ENCODE measurements at regions of chr1 and their contacts with region 1.

Region 1: DNA sequence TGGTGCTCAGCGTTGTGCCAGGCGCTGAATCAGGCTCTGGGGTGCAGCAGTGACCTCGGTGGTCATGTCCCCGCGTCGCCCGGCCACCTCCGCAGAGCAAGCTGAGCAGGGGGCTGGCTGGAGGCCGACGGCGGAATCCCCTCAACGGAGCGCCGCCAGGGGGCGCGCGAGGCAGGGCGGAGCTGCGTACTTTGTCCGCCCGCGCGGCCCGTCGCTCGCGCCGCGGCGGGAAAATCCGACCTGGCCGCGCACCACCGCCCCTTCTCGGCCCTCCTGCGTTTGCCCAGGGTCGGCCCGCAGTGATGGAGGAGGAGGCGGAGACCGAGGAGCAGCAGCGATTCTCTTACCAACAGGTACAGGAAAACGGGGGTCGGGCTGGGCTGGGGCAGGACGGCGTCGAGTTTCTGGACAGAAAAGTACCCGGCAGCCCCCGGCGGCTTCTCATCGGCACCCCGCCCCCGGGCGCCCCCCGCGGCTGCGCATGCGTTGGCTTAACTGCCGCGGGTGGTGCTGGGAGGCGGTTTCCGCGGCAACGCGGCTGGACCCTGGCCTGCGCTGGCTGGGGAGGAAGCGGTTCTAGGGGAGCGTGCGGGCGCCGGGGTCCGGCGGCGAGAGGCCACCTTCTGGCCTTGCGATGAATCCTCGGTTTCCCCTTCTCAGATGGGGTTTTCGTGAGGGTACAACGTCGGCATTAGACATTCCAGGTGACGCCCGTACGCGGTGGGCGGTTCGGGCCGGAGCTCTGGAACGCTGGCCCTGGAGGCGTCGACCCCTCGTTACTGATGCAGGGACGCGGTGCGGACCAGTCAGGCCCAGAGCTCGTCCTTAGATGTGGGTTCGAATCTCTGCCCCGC is at the start of gene CENPS:
- DNase-seq: peak; percentile 87
- H3K4me3 ChIP-seq: peak within 1 kb of the TSS; percentile 71 to 96 (median 87)
- H3K27ac ChIP-seq: peak within 1 kb of the TSS; percentile 91
- H3K4me1 ChIP-seq: peaks cover 9% of the 10 kb centered on the region
- H3K27me3 ChIP-seq: no peaks in the 10 kb centered on the region
- CTCF ChIP-seq: peak; percentile 65 to 89
- total RNA-seq, gene CENPS: 9.7 to 24.1 TPM

Region 2: DNA sequence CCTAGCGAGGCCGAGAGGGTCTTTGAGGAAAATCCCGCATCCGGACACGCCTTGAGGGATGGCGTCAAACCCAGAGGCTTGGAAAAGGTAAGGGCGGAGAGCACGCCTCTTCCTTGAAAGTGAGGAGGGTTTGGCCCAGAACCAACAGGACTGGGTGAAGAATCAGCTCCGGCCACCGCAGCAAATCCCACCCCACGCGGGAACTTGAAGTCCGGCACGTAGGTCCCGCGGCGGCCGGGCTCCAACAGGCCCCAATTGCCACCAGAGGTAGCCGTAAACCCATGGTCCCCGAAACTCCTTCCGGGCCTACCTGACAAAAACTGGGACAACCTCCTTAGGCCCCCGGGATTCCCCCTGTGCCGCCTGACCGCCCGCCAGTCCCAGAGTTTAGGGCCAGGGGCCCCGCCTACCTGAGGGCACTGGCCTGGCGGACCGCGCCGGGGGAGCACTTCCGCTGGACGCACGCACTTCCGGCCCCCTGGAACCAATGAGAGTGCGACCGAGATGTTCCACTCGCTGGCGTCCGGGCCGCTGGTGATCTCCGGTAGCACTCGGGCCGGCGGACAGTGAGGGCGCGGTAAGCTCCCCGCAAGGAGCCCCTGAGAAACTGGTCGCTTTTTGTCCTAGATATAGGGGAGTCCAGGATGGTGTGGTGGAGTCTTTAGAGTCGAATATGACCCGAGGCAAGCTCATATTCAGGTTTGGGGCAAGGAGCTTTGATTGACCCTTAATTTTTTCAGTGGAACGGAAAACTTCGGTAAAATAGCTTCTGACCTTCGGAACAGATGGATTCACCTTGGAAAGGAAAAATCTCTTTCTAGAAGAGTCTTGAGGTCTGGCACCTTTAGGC is 487.3 kb before region 1 on chr1 and contains the starts of genes LZIC and NMNAT1:
- CTCF ChIA-PET with region 1: no interaction called
- dilution Hi-C with region 1: no loop called
- in situ Hi-C with region 1: no loop called
- intact Hi-C with region 1: loop called (anchors 2 kb)
- DNase-seq: peak; percentile 95
- H3K4me3 ChIP-seq: peak within 1 kb of the TSS; percentile 66 to 77 (median 67)
- H3K27ac ChIP-seq: peak within 1 kb of the TSS; percentile 95
- H3K4me1 ChIP-seq: peaks cover 5% of the 10 kb centered on the region
- H3K27me3 ChIP-seq: no peaks in the 10 kb centered on the region
- CTCF ChIP-seq: no peak
- total RNA-seq, gene LZIC: 19.8 to 30.6 TPM
- total RNA-seq, gene NMNAT1: 9.7 to 11.1 TPM

Region 3: DNA sequence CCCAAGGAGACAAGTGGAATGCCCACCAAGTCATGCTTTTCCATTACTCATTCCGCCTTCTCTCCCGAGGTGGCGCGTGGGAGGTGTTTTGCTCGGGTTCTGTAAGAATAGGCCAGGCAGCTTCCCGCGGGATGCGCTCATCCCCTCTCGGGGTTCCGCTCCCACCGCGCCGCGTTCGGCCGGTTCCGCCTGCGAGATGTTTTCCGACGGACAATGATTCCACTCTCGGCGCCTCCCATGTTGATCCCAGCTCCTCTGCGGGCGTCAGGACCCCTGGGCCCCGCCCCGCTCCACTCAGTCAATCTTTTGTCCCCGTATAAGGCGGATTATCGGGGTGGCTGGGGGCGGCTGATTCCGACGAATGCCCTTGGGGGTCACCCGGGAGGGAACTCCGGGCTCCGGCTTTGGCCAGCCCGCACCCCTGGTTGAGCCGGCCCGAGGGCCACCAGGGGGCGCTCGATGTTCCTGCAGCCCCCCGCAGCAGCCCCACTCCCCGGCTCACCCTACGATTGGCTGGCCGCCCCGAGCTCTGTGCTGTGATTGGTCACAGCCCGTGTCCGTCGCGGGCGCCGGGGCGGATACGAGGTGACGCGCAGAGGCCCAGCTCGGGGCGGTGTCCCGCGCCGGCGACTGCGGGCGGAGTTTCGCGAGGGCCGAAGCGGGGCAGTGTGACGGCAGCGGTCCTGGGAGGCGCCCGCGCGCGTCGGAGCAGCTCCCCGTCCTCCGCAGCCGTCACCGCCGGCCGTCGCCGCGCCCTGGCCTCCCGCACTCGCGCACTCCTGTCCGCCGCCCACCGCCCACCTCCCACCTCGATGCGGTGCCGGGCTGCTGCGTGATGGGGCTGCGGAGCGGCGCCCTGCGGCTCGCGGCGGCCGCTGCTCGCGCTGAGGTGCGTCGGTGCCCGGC is 220.3 kb before region 1 on chr1 and contains the start of gene KIF1B:
- CTCF ChIA-PET with region 1: no interaction called
- dilution Hi-C with region 1: no loop called
- in situ Hi-C with region 1: no loop called
- intact Hi-C with region 1: loop called (anchors 1 kb)
- DNase-seq: peak; percentile 98
- H3K4me3 ChIP-seq: peak within 1 kb of the TSS; percentile 87 to 97 (median 93)
- H3K27ac ChIP-seq: peak within 1 kb of the TSS; percentile 87
- H3K4me1 ChIP-seq: peaks cover 16% of the 10 kb centered on the region
- H3K27me3 ChIP-seq: no peaks in the 10 kb centered on the region
- CTCF ChIP-seq: peak; percentile 56 to 98
- total RNA-seq, gene KIF1B: 24.7 to 36.2 TPM

Region 4: GRCh38 chr1:10378081-10378841 is 52.2 kb before region 1 on chr1:
- CTCF ChIA-PET with region 1: interaction called, 4 read pairs
- dilution Hi-C with region 1: no loop called
- in situ Hi-C with region 1: no loop called
- intact Hi-C with region 1: loop called (anchors 1 kb)
- DNase-seq: peak; percentile 14
- H3K4me3 ChIP-seq: no peak overlapping the region
- H3K27ac ChIP-seq: no peak overlapping the region
- H3K4me1 ChIP-seq: no peaks in the 10 kb centered on the region
- H3K27me3 ChIP-seq: no peaks in the 10 kb centered on the region
- CTCF ChIP-seq: no peak

Region 5: GRCh38 chr1:10803971-10804820 is 373.8 kb after region 1 on chr1:
- CTCF ChIA-PET with region 1: no interaction called
- dilution Hi-C with region 1: no loop called
- in situ Hi-C with region 1: no loop called
- intact Hi-C with region 1: loop called (anchors 10 kb)
- DNase-seq: peak; percentile 82
- H3K4me3 ChIP-seq: peak overlapping the region in 2 of 3 experiments; percentile 13 to 18
- H3K27ac ChIP-seq: peak overlapping the region; percentile 76
- H3K4me1 ChIP-seq: peaks cover 24% of the 10 kb centered on the region
- H3K27me3 ChIP-seq: no peaks in the 10 kb centered on the region
- CTCF ChIP-seq: no peak